ENCODE measurements at regions of chr7 and their contacts with region 1.

Region 1: GRCh38 chr7:143258831-143259230 is 4.4 kb upstream of the GSTK1 start:
- DNase-seq: peak; percentile 45
- CTCF ChIP-seq: no peak

Region 2: DNA sequence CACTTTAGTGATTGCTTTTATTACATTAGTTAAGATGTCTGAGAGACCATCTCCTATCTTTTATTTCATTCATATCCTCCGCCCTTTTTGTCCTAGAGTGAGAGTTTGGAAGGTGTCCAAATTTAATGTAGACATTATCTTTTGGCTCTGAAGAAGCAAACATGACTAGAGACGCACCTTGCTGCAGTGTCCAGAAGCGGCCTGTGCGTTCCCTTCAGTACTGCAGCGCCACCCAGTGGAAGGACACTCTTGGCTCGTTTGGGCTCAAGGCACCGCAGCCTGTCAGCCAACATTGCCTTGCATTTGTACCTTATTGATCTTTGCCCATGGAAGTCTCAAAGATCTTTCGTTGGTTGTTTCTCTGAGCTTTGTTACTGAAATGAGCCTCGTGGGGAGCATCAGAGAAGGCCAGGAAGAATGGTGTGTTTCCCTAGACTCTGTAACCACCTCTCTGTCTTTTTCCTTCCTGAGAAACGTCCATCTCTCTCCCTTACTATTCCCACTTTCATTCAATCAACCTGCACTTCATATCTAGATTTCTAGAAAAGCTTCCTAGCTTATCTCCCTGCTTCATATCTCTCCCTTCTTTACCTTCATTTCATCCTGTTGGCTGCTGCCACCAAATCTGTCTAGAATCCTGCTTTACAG is 46.7 kb after region 1 on chr7:
- in situ Hi-C with region 1: loop called (anchors 10 kb)
- DNase-seq: peak; percentile 40
- CTCF ChIP-seq: peak; percentile 56

Region 3: GRCh38 chr7:143391462-143392404 is 132.9 kb after region 1 on chr7:
- in situ Hi-C with region 1: no loop called
- DNase-seq: no peak
- CTCF ChIP-seq: no peak